ENCODE measurements at regions of chr21 and their contacts with region 1.

Region 1: GRCh38 chr21:42002421-42002958 is 7.7 kb downstream of the ZBTB21 start:
- DNase-seq: peak; percentile 89
- ATAC-seq: peak; percentile 96
- H3K4me3 ChIP-seq: peak overlapping the region; percentile 15; the same call in 1 of the 2 replicates
- H3K27ac ChIP-seq: peak overlapping the region; percentile 80
- H3K4me1 ChIP-seq: peaks cover 31% of the 10 kb centered on the region
- H3K27me3 ChIP-seq: no peaks in the 10 kb centered on the region
- CTCF ChIP-seq: no peak

Region 2: GRCh38 chr21:41966041-41966684 is 36.3 kb before region 1 on chr21:
- CTCF ChIA-PET with region 1: interaction called, 3 read pairs
- POLR2A ChIA-PET with region 1: no interaction called
- intact Hi-C with region 1: loop called (anchors 2 kb)
- DNase-seq: peak; percentile 96
- ATAC-seq: peak; percentile 68
- H3K4me3 ChIP-seq: no peak overlapping the region
- H3K27ac ChIP-seq: peak overlapping the region; percentile 95
- H3K4me1 ChIP-seq: peaks cover 46% of the 10 kb centered on the region
- H3K27me3 ChIP-seq: no peaks in the 10 kb centered on the region
- CTCF ChIP-seq: peak; percentile 53

Region 3: DNA sequence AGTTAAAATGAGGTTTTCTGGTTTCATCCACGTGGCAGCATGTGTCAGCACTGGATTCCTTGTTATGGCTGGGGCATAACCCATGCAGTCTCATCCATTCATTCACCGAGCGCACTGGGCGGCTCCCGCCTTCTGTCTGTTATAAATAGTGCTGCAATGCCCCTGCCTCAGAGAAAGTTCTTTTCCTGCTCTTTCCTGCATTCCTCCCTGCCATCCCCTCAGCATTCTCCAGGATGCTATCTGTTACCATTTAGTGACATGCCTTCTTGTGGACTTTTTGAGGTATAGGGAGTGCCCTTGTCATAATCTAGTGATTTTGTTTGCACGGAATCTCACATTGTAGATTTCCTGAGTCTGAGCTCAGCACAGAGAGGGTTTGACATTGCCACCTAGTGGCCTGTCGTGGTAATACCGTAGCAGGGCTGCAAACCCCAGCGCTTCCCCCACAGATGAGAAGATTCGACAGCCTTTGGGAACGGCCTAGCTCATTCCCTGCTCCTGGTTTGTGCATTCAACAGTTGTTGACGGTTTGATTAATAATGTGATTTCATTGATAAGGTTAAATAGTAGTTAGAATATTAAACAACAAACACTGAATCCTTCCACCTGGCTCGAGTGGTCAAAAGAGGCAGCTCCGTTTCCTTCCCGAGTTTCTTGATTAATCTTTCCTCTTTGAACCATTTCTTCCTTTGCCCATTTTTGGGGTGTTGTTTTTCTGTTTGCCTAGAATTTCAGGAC is 114.9 kb after region 1 on chr21:
- CTCF ChIA-PET with region 1: interaction called, 3 read pairs
- POLR2A ChIA-PET with region 1: no interaction called
- intact Hi-C with region 1: loop called (anchors 2 kb)
- DNase-seq: peak; percentile 94
- ATAC-seq: peak; percentile 65
- H3K4me3 ChIP-seq: peak overlapping the region; percentile 14; the same call in 1 of the 2 replicates
- H3K27ac ChIP-seq: peak overlapping the region; percentile 60
- H3K4me1 ChIP-seq: peaks cover 59% of the 10 kb centered on the region
- H3K27me3 ChIP-seq: no peaks in the 10 kb centered on the region
- CTCF ChIP-seq: peak; percentile 97

Measured in PC-3 (cell line).